Heart left ventricle (tissue), 16 donors: ENCODE measurements at regions of chr6 and their contacts with region 1.

Region 1: DNA sequence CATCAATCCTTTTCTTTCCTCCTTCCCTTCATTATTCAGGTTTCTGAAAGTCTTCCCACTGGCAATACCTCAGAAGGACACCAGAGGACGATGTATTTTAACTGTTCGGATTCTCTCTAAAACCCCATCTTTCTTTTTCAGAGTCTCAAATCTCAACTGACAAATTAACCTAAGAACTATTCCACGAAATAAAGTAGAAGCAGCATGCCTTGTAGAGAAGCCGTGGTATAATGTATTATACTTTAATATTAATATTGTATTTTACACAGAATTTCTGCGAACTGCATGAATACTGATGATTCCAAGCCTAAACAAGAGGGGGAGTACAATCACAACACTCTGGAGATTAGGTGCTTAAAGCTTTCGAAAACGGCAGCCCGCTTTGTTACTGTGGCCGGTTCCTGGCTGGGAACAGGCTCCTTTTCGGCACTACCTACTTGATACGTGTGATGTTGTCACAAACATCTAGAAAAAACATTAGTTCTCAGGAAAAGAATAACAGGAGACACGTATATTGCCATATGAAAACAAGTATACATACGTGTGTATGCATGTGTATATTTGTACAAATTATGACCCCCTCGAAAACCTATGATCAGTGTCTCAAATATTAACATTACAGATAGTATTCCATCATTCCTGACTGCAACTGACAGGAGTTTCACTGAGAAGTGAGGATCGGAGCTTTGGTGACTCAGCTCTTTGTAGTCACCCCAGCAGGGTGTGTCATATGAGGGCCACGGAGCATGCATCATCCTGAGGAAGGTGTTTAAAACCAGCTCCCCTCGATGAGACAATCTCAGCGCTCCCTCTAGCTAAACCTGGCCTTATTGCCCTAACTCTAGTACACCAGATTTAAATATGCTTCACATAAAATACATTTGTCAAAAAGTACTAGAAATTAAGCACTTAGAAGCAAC is 319.7 kb upstream of the TCF21 start:
- DNase-seq: peak in 3 of 5 donors; percentile 8 to 42 (median 26)
- ATAC-seq: peak; percentile 66 to 89 (median 77)
- H3K4me3 ChIP-seq: peak overlapping the region in 11 of 12 donors; percentile 0 to 56 (median 44)
- H3K27ac ChIP-seq: peak overlapping the region in 5 of 12 donors; percentile 6 to 43 (median 28)
- H3K4me1 ChIP-seq: peaks cover 0 to 10% (median 0%) of the 10 kb centered on the region in 12 donors
- H3K27me3 ChIP-seq: peaks cover 0 to 5% (median 0%) of the 10 kb centered on the region in 9 donors
- CTCF ChIP-seq: peak; percentile 74 to 91 (median 83)
- POLR2A ChIP-seq: no peak

Region 2: GRCh38 chr6:133837801-133838349 is 268.6 kb after region 1 on chr6:
- intact Hi-C with region 1: loop called in 3 of 10 experiments (anchors 5 to 10 kb)
- DNase-seq: peak in 1 of 5 donors; percentile 68
- ATAC-seq: peak in 2 of 4 donors; percentile 24 to 28
- H3K4me3 ChIP-seq: peak overlapping the region in 9 of 12 donors; percentile 32 to 49 (median 37)
- H3K27ac ChIP-seq: no peak overlapping the region
- H3K4me1 ChIP-seq: peaks cover 0 to 6% (median 0%) of the 10 kb centered on the region in 12 donors
- H3K27me3 ChIP-seq: peaks cover 0 to 13% (median 3%) of the 10 kb centered on the region in 9 donors
- CTCF ChIP-seq: peak; percentile 28 to 58 (median 46)
- POLR2A ChIP-seq: no peak

Region 3: DNA sequence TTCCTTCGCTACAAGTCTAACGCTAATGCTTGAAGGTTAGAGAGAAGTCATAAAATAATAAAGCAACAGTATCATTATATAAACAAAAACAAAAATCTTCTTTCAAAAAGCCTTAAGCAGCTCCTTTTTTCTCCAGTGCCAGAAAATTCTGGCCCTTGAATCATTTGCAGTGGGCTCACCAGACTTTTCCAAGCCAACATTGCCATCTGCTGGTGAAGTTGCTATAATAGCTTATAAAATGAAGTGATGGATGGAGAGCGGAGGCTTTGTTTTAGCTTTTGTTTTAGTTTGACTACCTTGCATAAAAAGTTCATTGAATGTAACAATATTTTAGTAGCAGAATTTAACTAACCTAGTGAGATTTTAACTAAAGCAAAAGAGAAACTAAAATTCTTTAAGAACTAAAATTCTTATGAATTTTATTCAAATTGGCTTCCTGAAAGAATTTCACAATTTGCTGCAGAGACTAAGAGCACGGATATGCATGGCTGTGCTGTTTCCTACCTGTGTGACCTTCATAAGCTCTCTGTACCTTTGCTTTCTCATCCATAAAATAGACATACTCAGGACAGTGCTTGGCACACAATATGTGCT is 528.0 kb after region 1 on chr6:
- intact Hi-C with region 1: loop called in 8 of 10 experiments (anchors 5 to 10 kb)
- DNase-seq: peak in 4 of 5 donors; percentile 39 to 62 (median 50)
- ATAC-seq: peak in 2 of 4 donors; percentile 50 to 56
- H3K4me3 ChIP-seq: no peak overlapping the region
- H3K27ac ChIP-seq: no peak overlapping the region
- H3K4me1 ChIP-seq: no peaks in the 10 kb centered on the region
- H3K27me3 ChIP-seq: peaks cover 0 to 3% (median 0%) of the 10 kb centered on the region in 9 donors
- CTCF ChIP-seq: peak; percentile 41 to 76 (median 68)
- POLR2A ChIP-seq: no peak